Head of caudate nucleus (tissue), 42 donors: ENCODE measurements at regions of chr3 and their contacts with region 1.

Region 1: DNA sequence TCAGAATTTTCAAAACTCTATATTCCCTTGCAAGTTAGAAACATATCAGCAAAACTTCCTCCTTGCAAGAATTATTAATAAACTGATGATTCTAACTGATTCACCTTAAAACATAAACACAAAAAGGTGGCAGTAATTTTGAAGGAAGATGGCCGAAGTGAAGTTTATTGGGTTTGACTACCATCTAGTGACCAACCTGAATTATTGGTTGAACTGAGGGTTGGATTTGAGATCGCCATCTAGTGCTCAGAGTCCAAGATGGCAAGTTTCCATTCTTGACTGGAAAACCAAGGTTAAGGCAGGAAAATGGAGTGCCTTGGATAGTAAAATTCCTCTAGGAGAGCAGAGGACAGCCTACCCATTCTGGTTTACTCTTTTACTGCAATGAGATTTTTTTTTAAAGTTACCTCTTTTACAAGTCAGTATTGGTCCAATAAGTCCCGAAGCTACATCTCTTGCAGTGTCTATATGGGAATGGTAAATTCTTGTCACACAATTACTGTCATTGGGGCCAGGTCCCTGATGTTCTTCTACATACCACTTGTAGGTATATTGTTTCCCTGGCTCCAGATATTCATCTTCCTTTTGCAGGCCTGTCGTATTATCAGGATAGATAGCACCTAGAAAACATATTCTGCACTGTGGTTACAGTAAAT is 51.6 kb upstream of the CP start:
- DNase-seq: peak in 28 of 42 donors; percentile 18 to 82 (median 57)

Region 2: GRCh38 chr3:148727247-148727646 is 546.0 kb before region 1 on chr3:
- intact Hi-C with region 1: loop called (anchors 10 kb)
- DNase-seq: peak; percentile 60 to 92 (median 78)

Region 3: DNA sequence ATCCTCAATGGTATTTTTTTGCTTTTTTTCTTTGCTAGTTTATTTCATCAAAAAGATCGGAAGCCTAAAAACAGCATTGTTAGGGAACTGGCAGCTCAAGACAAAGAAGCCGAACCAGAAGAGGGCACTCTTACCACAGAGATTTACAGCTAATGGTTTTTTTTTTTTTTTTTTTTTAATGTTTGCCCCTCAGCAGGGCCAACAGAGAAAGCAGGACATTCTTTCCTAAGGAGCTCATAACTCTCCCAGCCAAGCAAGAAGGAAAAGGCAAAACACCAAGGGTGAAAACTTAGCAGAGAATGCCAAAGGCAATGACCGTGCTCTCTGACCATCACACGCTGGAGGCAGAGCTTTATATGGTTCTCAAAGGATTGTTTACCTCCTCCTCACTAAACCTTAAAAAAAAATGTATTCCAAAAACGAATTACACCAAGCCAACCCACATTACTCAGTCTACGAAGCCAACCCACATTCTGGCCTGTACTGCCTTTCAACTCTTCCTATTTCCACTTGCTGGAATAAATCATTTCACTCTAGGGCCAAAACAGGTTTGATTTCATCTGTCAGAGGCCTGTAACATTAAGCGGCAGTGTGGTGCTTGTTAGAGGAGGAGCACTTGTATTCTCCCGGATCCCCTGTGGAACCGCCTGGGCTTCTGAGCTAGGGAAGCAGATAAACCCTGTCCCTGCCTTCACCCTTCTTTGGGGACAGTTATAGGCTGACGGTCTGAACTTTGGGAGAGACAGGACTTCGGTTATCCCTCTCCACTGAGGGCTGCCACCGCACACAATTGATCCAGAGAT is 317.5 kb before region 1 on chr3:
- intact Hi-C with region 1: loop called (anchors 5 kb)
- DNase-seq: peak in 19 of 42 donors; percentile 11 to 80 (median 48)

Region 4: DNA sequence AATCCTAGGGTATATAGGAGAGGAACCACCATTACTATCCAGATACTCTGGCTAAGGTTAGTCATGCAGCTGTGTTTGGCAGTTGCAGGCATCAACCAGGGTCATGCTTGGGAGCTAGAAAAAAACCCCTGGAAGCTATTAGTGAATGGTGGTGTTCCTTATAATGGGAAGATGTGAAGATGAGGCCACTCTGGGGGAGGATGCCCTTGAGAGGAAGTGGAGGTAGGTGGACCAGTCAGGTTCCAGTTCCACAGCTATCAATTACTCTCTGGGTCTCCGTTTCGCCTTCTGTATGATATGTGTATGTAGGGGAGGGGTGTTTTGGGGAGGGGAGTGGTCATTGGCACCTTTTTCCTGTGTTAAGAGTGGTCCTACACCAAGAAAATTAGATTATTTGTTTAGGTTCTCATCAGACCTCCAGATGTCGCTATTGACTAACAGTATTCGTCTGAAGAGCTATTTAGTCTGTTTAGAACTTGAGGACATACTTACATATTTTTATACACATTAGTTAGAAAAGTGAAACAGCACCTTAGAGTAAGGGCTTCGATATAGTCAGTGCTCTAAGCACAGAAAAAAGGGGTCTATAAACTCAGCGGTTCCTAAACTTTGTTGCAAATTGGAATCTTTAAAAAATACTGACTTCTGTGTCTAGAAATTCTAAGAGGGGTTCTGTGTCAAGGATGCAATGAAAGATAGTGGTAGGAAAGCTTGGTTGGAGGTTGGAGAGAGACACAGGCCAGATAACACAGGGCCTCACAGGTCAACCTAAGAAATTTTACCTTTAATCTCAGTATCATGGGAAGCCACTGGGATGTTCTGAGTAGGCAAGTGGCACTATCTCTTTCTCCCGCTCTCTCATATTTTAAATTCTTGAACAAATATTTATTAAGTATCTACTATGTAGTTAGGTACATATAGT is 152.9 kb before region 1 on chr3:
- intact Hi-C with region 1: loop called (anchors 5 kb)
- DNase-seq: peak in 3 of 42 donors; percentile 23 to 65 (median 35)

Region 5: GRCh38 chr3:149377408-149378377 is 104.5 kb after region 1 on chr3 and contains the start of gene TM4SF1:
- intact Hi-C with region 1: no loop called
- DNase-seq: no peak